Activated CD8-positive, alpha-beta T cell treated with anti-CD3 and anti-CD28 coated beads, Interleukin-2, amount 10 ng/mL, durations not matched to agents 7 days and 5 days (primary cell): ENCODE measurements at regions of chr11 and their contacts with region 1.

Region 1: GRCh38 chr11:72430741-72431570 is 3.4 kb downstream of the CLPB start:
- DNase-seq: peak; percentile 60
- ATAC-seq: peak; percentile 28
- H3K4me3 Mint-ChIP-seq: no peak overlapping the region
- H3K27ac Mint-ChIP-seq: peak overlapping the region; percentile 53
- H3K4me1 Mint-ChIP-seq: peaks cover 51% of the 10 kb centered on the region
- H3K27me3 Mint-ChIP-seq: no peaks in the 10 kb centered on the region

Region 2: DNA sequence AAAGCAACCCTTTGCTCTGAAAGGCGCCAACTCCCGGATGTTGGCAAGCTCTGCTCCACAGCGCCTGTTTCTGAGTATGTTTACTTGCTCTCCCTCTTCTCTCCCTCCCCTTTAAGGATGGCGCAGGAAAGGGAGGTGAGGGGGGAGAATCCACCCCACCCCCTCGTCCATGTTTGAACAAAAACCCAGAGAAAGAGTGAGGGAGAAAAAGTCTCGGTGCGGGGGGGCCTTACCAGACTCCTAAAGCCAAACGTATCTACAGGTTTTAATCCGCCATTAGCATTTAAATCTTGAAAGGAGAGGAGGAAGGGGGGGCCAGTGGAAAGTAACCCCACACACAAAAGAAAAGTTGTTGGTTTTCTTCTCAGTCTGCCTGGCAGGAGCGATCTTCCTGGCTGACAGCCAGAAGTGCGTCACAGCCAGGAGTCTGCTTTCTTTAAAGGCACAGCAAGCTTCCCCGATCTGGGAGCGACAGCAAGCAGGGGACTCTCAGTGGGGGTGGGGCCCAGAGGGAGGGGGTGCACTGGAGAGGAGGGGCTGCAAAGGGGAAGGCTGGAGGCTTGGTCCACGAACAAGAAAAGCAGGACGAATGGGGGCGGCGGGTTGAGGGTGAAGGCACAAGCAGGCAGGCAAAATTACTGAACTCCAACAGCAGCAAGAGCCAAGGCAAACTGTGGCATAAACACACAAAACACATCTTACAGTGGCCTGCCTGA is 390.1 kb before region 1 on chr11:
- CTCF ChIA-PET with region 1: interaction called, 14 read pairs
- POLR2A ChIA-PET with region 1: no interaction called
- DNase-seq: peak; percentile 73
- ATAC-seq: peak; percentile 30
- H3K4me3 Mint-ChIP-seq: no peak overlapping the region
- H3K27ac Mint-ChIP-seq: no peak overlapping the region
- H3K4me1 Mint-ChIP-seq: peaks cover 7% of the 10 kb centered on the region
- H3K27me3 Mint-ChIP-seq: no peaks in the 10 kb centered on the region

Region 3: DNA sequence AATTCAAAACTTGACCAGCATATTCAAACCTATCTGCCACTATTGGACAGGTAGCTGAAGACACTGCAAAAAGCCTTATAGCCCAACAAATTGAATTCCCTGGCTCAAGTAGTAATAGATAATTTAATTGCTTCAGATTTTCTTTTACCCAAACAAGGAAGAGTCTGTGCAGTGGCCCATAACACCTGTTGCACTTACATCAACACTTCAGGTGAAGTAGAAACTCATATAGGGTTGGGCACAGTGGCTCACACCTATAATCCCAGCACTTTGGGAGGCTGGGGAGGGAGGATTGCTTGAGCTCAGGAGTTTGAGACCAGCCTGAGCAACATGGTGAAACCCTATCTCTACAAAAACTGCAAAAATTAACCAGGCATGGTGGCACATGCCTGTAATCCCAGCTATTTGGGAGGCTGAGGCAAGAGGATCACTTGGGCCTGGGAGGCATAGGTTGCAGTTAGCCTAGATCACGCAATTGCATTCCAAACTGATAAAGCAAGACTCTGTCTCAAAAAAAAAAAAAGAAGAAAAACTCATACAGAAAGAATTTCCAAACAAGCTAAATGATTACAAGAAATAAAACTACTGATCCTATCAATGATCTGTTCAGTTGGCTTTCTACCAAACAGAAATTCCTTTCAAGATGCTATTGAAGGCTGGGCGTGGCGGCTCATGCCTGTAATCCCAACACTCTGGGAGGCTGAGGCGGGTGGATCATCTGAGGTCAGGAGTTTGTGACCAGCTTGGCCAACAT is 286.0 kb before region 1 on chr11:
- CTCF ChIA-PET with region 1: interaction called, 27 read pairs
- POLR2A ChIA-PET with region 1: no interaction called
- DNase-seq: no peak
- ATAC-seq: no peak
- H3K4me3 Mint-ChIP-seq: no peak overlapping the region
- H3K27ac Mint-ChIP-seq: no peak overlapping the region
- H3K4me1 Mint-ChIP-seq: peaks cover 24% of the 10 kb centered on the region
- H3K27me3 Mint-ChIP-seq: peaks cover 8% of the 10 kb centered on the region

Region 4: GRCh38 chr11:72267956-72268617 is 162.9 kb before region 1 on chr11:
- CTCF ChIA-PET with region 1: interaction called, 15 read pairs
- POLR2A ChIA-PET with region 1: no interaction called
- DNase-seq: no peak
- ATAC-seq: no peak
- H3K4me3 Mint-ChIP-seq: no peak overlapping the region
- H3K27ac Mint-ChIP-seq: no peak overlapping the region
- H3K4me1 Mint-ChIP-seq: peaks cover 19% of the 10 kb centered on the region
- H3K27me3 Mint-ChIP-seq: peaks cover 35% of the 10 kb centered on the region

Region 5: GRCh38 chr11:72328366-72329224 is 102.4 kb before region 1 on chr11:
- CTCF ChIA-PET with region 1: interaction called, 90 read pairs
- POLR2A ChIA-PET with region 1: interaction called, 3 read pairs
- DNase-seq: peak; percentile 53
- ATAC-seq: peak; percentile 34
- H3K4me3 Mint-ChIP-seq: no peak overlapping the region
- H3K27ac Mint-ChIP-seq: peak overlapping the region; percentile 62
- H3K4me1 Mint-ChIP-seq: peaks cover 68% of the 10 kb centered on the region
- H3K27me3 Mint-ChIP-seq: no peaks in the 10 kb centered on the region

Region 6: DNA sequence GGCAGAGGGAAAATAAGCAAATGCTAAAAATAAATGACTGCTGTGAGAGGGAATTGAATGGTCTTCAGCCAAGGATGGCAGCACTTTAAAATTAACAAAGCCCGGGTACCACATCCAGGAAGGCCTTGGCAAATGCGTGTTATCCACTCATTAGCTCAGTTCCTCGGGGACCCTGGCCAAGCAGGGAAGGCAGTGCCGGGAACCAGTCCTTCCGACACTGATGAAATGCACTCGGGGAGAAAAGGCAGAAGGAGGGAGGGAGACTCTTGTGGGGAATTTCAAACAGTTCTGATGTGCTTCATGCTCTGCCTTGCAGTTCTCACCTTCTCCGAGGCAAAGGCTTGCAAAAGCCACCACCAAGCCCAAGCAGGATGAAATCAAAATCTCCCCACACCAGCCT is 34.9 kb before region 1 on chr11:
- CTCF ChIA-PET with region 1: interaction called, 11 read pairs
- POLR2A ChIA-PET with region 1: no interaction called
- DNase-seq: no peak
- ATAC-seq: no peak
- H3K4me3 Mint-ChIP-seq: no peak overlapping the region
- H3K27ac Mint-ChIP-seq: no peak overlapping the region
- H3K4me1 Mint-ChIP-seq: no peaks in the 10 kb centered on the region
- H3K27me3 Mint-ChIP-seq: no peaks in the 10 kb centered on the region